IMR-90 (cell line): ENCODE measurements at regions of chr5 and their contacts with region 1.

Region 1: DNA sequence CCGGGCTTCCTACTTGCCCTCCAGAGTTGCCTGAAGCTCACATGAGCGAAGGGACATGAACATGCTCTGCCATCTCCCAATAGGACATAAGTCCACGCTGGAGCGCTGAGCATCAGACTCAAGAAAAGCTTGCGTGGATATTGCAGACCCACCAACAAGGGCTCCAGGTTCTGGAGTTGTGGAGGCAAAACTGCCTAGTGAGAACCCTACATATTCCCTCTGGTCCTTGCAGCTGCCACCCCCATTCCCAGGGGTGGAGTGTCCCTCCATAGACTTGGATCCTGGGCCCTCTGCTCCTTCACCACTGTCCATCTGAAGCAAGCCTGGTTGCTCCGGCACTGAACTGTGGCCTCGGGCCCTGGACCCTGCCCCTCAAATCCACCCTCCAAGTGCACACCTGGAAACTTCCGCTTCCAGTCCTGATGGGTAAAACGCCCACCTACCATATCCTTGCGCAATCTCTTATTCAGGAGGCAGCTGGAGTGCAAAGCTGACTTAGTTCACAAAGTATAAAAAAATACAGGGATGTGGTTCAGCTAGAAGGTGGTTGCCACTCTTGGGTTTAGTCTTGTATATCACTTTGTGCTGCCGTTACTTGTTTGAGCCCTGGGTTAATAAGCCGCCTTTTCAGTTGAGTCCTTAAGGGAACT is 28.0 kb downstream of the HRH2 start:
- DNase-seq: no peak
- ATAC-seq: no peak
- H3K4me3 ChIP-seq: no peak overlapping the region
- H3K27ac ChIP-seq: no peak overlapping the region
- H3K4me1 ChIP-seq: no peaks in the 10 kb centered on the region
- H3K27me3 ChIP-seq: no peaks in the 10 kb centered on the region
- CTCF ChIP-seq: no peak
- POLR2A ChIP-seq: no peak
- RAD21 ChIP-seq: no peak

Region 2: DNA sequence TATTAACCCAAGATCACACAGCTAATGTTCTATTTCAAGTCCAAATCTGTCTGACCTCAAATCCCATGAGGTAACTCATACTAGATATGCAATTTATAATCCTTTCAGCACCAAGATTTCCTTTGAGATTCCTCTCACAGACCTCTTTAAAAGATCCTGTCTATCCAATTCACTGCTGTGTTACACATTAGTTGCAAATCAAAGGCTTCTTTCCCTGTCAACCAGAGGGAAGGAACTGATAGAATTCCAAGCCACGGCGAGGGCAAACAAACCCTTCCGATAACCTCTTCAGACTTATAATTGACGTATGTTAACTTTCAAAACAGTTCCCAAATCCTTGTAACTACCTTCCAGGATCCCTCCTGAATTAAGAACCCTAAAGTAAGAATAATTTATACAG is 410.7 kb before region 1 on chr5:
- CTCF ChIA-PET with region 1: no interaction called
- POLR2A ChIA-PET with region 1: no interaction called
- dilution Hi-C with region 1: no loop called
- in situ Hi-C with region 1: no loop called
- intact Hi-C with region 1: no loop called
- DNase-seq: no peak
- ATAC-seq: no peak
- H3K4me3 ChIP-seq: no peak overlapping the region
- H3K27ac ChIP-seq: no peak overlapping the region
- H3K4me1 ChIP-seq: no peaks in the 10 kb centered on the region
- H3K27me3 ChIP-seq: peaks cover 5% of the 10 kb centered on the region
- CTCF ChIP-seq: no peak
- POLR2A ChIP-seq: no peak
- RAD21 ChIP-seq: no peak

Region 3: GRCh38 chr5:175663186-175664184 is 22.3 kb before region 1 on chr5:
- CTCF ChIA-PET with region 1: no interaction called
- POLR2A ChIA-PET with region 1: no interaction called
- dilution Hi-C with region 1: no loop called
- in situ Hi-C with region 1: no loop called
- intact Hi-C with region 1: loop called (anchors 1 kb)
- DNase-seq: no peak
- ATAC-seq: no peak
- H3K4me3 ChIP-seq: no peak overlapping the region
- H3K27ac ChIP-seq: no peak overlapping the region
- H3K4me1 ChIP-seq: no peaks in the 10 kb centered on the region
- H3K27me3 ChIP-seq: peaks cover 3% of the 10 kb centered on the region; the same call in 1 of the 2 replicates
- CTCF ChIP-seq: no peak
- POLR2A ChIP-seq: no peak
- RAD21 ChIP-seq: no peak